Heart left ventricle (tissue), 16 donors: ENCODE measurements at regions of chr15 and their contacts with region 1.

Region 1: GRCh38 chr15:25508369-25509002 is 69.7 kb upstream of the UBE3A start:
- DNase-seq: no peak
- ATAC-seq: peak in 2 of 4 donors; percentile 39 to 52
- H3K4me3 ChIP-seq: no peak overlapping the region
- H3K27ac ChIP-seq: no peak overlapping the region
- H3K4me1 ChIP-seq: peaks cover 0 to 3% (median 0%) of the 10 kb centered on the region in 12 donors
- H3K27me3 ChIP-seq: no peaks in the 10 kb centered on the region
- CTCF ChIP-seq: peak; percentile 46 to 83 (median 72)
- POLR2A ChIP-seq: no peak

Region 2: GRCh38 chr15:23642413-23643044 is 1866.0 kb before region 1 on chr15:
- intact Hi-C with region 1: loop called in 4 of 10 experiments (anchors 5 to 10 kb)
- DNase-seq: peak in 4 of 5 donors; percentile 35 to 51 (median 49)
- ATAC-seq: peak in 3 of 4 donors; percentile 73 to 88 (median 76)
- H3K4me3 ChIP-seq: no peak overlapping the region
- H3K27ac ChIP-seq: no peak overlapping the region
- H3K4me1 ChIP-seq: peaks cover 0 to 6% (median 0%) of the 10 kb centered on the region in 12 donors
- H3K27me3 ChIP-seq: peaks cover 0 to 30% (median 6%) of the 10 kb centered on the region in 9 donors
- CTCF ChIP-seq: peak; percentile 66 to 88 (median 78)
- POLR2A ChIP-seq: no peak

Region 3: DNA sequence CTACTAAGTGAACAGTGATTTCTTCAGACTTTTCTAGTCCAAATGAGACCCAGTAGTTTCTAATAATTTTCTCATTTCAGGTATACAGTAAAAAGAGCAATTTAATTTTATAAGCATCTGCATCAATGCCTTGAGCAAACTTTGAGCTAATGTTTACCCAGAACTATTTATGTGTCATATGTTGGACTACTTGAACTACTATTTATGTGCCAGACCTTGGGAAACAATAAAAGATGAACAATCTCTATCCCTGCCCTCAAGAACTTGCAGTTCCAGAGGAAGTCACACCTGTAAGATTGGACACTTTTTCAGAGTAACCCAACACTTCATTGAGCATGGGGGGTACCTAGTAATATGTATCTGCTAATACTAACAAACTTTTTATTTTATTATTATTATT is 67.4 kb before region 1 on chr15:
- intact Hi-C with region 1: no loop called
- DNase-seq: no peak
- ATAC-seq: no peak
- H3K4me3 ChIP-seq: no peak overlapping the region
- H3K27ac ChIP-seq: no peak overlapping the region
- H3K4me1 ChIP-seq: peaks cover 0 to 24% (median 18%) of the 10 kb centered on the region in 12 donors
- H3K27me3 ChIP-seq: no peaks in the 10 kb centered on the region
- CTCF ChIP-seq: no peak
- POLR2A ChIP-seq: no peak

Region 4: GRCh38 chr15:25693321-25694237 is 185.1 kb after region 1 on chr15:
- intact Hi-C with region 1: loop called (anchors 1 to 5 kb)
- DNase-seq: peak in 2 of 5 donors; percentile 31 to 43
- ATAC-seq: peak in 3 of 4 donors; percentile 51 to 67 (median 58)
- H3K4me3 ChIP-seq: no peak overlapping the region
- H3K27ac ChIP-seq: no peak overlapping the region
- H3K4me1 ChIP-seq: peaks cover 0 to 22% (median 0%) of the 10 kb centered on the region in 12 donors
- H3K27me3 ChIP-seq: no peaks in the 10 kb centered on the region
- CTCF ChIP-seq: peak; percentile 35 to 66 (median 59)
- POLR2A ChIP-seq: no peak

Region 5: GRCh38 chr15:25947323-25948314 is 439.1 kb after region 1 on chr15:
- intact Hi-C with region 1: loop called in 1 of 10 experiments (anchors 5 kb)
- DNase-seq: no peak
- ATAC-seq: no peak
- H3K4me3 ChIP-seq: no peak overlapping the region
- H3K27ac ChIP-seq: no peak overlapping the region
- H3K4me1 ChIP-seq: no peaks in the 10 kb centered on the region
- H3K27me3 ChIP-seq: peaks cover 0 to 6% (median 0%) of the 10 kb centered on the region in 9 donors
- CTCF ChIP-seq: no peak
- POLR2A ChIP-seq: no peak

Region 6: DNA sequence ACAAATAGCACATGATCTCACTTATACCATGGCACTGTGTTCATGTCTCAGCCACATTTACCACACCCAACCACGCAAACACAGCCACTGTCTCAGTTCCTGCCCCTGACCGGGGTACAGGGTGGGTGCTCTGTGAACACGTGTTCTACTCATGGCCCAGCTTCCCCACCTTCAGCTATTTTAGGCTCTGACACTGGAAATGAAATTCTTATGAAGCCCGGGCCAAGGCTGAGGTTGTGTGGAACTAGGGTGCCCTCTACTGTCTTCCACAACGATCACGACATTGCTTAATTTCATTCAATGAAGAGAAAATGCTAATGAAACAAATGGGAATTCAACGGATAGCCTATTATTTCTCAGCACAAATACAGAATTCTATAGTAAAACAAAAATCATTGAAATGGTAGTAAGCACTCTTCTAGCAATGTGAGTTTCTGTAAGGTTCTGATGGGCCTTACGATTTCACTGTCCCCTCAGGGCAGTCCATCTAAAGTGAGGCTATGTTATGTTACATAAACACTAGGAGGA is 1356.2 kb after region 1 on chr15:
- intact Hi-C with region 1: loop called in 9 of 10 experiments (anchors 2 to 10 kb)
- DNase-seq: no peak
- ATAC-seq: peak; percentile 61 to 84 (median 78)
- H3K4me3 ChIP-seq: no peak overlapping the region
- H3K27ac ChIP-seq: no peak overlapping the region
- H3K4me1 ChIP-seq: peaks cover 0 to 21% (median 0%) of the 10 kb centered on the region in 12 donors
- H3K27me3 ChIP-seq: peaks cover 13 to 40% (median 27%) of the 10 kb centered on the region in 9 donors
- CTCF ChIP-seq: peak; percentile 26 to 67 (median 58)
- POLR2A ChIP-seq: no peak